BJ (cell line): ENCODE measurements at regions of chr12 and their contacts with region 1.

Region 1: GRCh38 chr12:84696908-84697540 is 215.6 kb downstream of the SLC6A15 start:
- DNase-seq: peak; percentile 79
- H3K4me3 ChIP-seq: no peak overlapping the region
- H3K27me3 ChIP-seq: no peaks in the 10 kb centered on the region
- CTCF ChIP-seq: no peak

Region 2: GRCh38 chr12:84785951-84786350 is 88.9 kb after region 1 on chr12:
- CTCF ChIA-PET with region 1: no interaction called
- POLR2A ChIA-PET with region 1: interaction called, 10 read pairs
- DNase-seq: peak; percentile 76
- H3K4me3 ChIP-seq: no peak overlapping the region
- H3K27me3 ChIP-seq: no peaks in the 10 kb centered on the region
- CTCF ChIP-seq: no peak